AG04449 (cell line): ENCODE measurements at regions of chr18 and their contacts with region 1.

Region 1: DNA sequence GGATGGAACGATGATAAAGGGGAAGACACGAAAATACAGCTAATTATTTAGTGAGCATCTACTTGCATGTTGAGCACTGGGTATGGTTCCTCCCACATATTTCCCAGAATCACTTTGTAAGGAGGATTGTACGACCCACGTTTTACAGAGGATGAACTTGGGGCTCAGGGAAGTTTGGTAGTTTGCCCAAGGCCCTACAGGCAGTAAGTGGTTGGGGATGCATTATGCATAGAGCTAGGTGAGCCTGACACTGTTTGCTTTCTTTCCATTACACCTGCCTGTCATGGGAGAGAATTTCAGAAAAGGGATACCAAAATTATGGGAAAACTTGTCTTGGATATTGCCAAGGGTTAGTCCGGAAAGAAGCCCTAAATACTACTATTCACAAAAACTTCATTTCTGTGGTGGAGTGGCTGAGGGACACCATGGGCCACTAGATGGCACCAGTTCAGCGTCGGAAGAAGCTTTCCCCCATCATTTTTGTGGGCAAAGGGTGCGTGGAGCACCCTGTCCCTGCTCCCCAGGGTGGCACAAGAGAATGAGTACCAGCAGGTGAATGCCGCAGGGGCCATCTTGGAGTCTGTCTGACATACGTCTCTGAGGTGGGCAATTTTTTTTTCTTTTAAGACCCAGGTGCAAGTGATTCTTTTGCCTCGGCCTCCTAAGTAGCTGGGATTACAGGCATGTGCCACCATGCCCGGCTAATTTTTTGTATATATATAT is 23.5 kb upstream of the C18orf32 start:
- DNase-seq: no peak
- H3K4me3 ChIP-seq: no peak overlapping the region
- CTCF ChIP-seq: peak; percentile 86

Region 2: GRCh38 chr18:49459404-49460171 is 51.0 kb before region 1 on chr18:
- CTCF ChIA-PET with region 1: no interaction called
- POLR2A ChIA-PET with region 1: no interaction called
- DNase-seq: no peak
- H3K4me3 ChIP-seq: peak overlapping the region; percentile 93
- CTCF ChIP-seq: no peak

Region 3: DNA sequence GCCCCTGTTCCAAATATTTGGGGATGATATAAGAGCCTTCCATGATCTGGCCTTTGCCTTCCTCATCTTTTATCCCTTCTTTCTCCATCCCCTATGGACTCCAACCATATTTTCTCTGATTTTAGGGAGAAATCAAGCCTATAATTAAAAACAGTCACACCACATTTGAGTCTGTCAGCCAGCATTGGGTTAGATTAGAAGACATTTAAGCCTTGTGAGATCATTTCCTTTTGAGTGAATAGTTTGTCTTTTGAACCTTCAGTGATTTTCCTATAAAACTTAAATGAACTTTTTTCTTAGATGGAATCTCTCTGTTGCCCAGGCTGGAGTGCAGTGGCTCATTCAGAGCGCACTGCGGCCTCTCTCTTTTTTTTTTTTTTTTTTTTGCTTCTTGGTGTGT is 15.9 kb before region 1 on chr18:
- CTCF ChIA-PET with region 1: interaction called, 36 read pairs
- POLR2A ChIA-PET with region 1: no interaction called
- DNase-seq: no peak
- H3K4me3 ChIP-seq: no peak overlapping the region
- CTCF ChIP-seq: no peak

Region 4: GRCh38 chr18:49520661-49521145 is 10.1 kb after region 1 on chr18:
- CTCF ChIA-PET with region 1: interaction called, 25 read pairs
- POLR2A ChIA-PET with region 1: no interaction called
- DNase-seq: no peak
- H3K4me3 ChIP-seq: no peak overlapping the region
- CTCF ChIP-seq: no peak

Region 5: DNA sequence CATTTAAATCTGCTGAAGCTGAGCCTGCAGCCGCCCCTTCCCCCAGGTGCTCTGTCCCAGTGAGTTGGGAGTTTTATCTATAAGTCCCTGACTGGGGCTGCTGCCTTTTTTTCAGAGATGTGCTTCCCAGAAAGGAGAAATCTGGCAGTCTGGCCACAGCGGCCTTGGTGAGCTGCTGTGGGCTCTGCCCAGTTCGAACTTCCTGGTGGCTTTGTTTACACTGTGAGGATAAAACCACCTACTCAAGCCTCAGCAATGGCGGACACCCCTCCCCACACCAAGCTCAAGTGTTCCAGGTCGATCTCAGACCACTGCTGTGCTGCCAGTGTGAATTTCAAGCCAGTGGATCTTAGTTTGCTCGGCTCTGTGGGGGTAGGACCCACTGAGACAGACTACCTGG is 205.5 kb after region 1 on chr18:
- CTCF ChIA-PET with region 1: no interaction called
- POLR2A ChIA-PET with region 1: no interaction called
- DNase-seq: no peak
- H3K4me3 ChIP-seq: no peak overlapping the region
- CTCF ChIP-seq: no peak

Region 6: GRCh38 chr18:49768051-49768391 is 257.5 kb after region 1 on chr18:
- CTCF ChIA-PET with region 1: interaction called, 46 read pairs
- POLR2A ChIA-PET with region 1: interaction called, 4 read pairs
- DNase-seq: no peak
- H3K4me3 ChIP-seq: no peak overlapping the region
- CTCF ChIP-seq: peak; percentile 79

Region 7: GRCh38 chr18:49849331-49850217 is 339.0 kb after region 1 on chr18:
- CTCF ChIA-PET with region 1: interaction called, 349 read pairs
- POLR2A ChIA-PET with region 1: no interaction called
- DNase-seq: no peak
- H3K4me3 ChIP-seq: no peak overlapping the region
- CTCF ChIP-seq: no peak